Right ventricle myocardium inferior (tissue), 1 donor: ENCODE measurements at regions of chr6 and their contacts with region 1.

Region 1: GRCh38 chr6:164106345-164106769 is 691.8 kb downstream of the QKI start:
- DNase-seq: peak; percentile 80
- ATAC-seq: peak; percentile 41

Region 2: GRCh38 chr6:162856885-162857284 is 1249.5 kb before region 1 on chr6:
- intact Hi-C with region 1: loop called (anchors 10 kb)
- DNase-seq: no peak
- ATAC-seq: peak; percentile 85

Region 3: DNA sequence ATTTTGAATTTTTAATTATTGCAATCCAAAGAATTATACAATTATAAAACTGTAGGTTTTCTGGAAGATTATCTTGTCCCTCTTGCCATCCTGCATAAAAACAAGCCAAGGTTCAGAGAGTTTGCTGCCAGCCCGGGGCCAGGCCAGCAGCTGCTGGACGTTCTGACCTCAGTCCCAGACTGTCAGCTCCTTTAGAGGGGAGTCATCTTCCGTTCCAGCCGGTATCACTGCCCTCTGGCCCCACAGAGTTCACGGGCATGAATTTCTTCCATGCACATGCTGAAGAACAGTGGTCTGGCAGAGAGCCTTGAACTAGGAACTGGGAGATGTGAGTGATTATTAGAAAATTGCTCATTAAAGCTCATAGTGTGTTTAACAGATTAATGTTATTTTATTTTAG is 822.2 kb before region 1 on chr6:
- intact Hi-C with region 1: loop called (anchors 10 kb)
- DNase-seq: no peak
- ATAC-seq: no peak

Region 4: DNA sequence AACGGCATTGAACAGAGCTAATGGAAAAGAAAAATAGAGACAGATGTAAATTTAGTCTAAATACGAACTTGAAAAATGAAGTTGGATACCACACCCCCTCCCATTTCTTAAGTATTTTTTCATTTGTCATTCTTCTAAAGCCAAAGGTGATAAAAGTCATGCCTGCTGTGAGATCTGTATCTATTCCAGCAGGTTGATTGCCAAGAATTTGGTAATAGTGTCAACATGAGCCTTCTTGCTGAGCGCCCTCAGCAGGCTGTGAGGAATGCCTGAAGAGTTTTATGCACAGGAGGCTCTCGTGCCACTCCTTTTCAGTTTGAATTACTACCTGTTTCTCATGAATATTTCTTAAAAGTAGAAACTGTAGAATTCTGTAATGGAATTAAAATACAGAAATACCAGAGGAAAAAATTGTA is 526.5 kb before region 1 on chr6:
- intact Hi-C with region 1: loop called (anchors 5 kb)
- DNase-seq: no peak
- ATAC-seq: peak; percentile 38

Region 5: DNA sequence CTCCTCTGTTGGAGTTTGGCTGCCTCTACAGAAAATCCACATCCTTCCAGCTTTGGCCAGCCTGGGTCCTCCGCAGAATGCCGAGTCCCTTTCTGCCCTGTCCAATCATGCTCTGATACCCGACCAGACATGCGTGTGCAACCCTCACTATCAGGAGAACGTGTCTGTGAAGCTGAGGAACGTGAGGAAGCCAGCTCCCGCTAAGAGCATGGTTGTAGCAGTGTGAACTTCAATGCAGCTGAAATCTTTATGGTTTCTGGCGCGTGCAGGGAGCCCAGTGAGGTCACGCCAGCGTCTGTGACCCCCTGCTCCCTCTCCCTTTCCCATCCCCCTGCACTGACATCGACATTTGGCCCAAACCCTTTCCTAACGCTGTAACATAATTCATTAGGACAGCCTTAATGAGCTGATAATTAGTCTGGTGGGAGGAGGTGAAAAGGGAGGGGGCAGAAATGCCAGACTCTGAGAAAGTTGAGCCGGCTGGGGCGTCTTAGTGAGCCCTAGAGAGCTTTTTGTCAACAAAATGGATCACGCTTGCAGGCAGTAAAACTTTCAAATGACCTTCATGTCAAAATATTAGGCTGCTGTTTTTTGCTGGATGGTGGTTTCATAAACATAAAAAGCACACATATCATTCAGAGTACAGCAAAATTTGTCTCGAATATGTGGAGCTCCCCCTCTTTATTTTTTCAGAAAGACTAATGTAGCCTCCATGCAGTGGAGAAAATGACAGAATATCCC is 268.5 kb before region 1 on chr6:
- intact Hi-C with region 1: loop called (anchors 5 kb)
- DNase-seq: no peak
- ATAC-seq: peak; percentile 69

Region 6: DNA sequence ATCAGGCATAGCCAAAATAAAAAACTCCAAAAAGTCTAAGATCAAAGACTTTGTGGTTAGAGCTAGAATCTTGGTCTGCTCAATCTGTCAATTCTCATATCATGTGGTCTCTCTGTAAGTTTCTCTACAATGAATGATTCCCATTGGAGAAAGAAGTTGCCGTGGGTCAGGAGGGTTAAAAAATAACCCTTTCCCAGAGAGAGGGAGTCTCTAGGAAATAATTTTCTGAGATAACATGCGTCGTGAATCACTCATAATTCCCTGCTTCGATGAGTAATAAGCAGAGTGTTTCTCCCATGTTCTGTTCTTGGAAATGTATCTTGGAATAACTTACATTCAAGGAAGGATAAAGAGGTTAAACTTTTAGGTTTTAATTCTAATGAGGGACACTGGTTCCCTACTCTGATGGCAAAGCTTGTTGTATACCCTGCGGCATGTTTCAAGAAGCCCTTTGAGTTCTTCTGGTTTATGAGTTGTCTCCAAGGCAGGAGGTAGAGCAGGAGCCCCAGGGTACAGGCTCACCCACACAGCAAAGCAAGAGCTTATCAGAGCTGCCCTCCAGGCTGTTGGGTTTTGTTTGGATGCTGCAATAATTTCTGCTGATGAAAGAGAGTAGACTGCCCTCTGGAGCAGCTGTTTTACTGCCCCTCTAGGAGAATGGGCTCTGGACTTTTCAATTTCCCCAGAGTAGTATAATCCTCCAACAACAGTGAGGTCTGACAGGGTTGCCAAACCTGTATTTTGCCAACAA is 92.7 kb before region 1 on chr6:
- intact Hi-C with region 1: no loop called
- DNase-seq: no peak
- ATAC-seq: no peak

Region 7: GRCh38 chr6:164167873-164168405 is 61.6 kb after region 1 on chr6:
- intact Hi-C with region 1: loop called (anchors 5 kb)
- DNase-seq: no peak
- ATAC-seq: peak; percentile 54